Heart left ventricle (tissue), 16 donors: ENCODE measurements at regions of chr7 and their contacts with region 1.

Region 1: GRCh38 chr7:102450242-102450641 is 14.4 kb downstream of the ALKBH4 start:
- DNase-seq: no peak
- ATAC-seq: no peak
- H3K4me3 ChIP-seq: no peak overlapping the region
- H3K27ac ChIP-seq: no peak overlapping the region
- H3K4me1 ChIP-seq: peaks cover 0 to 11% (median 0%) of the 10 kb centered on the region in 12 donors
- H3K27me3 ChIP-seq: no peaks in the 10 kb centered on the region
- CTCF ChIP-seq: peak in 1 of 12 donors; percentile 19
- POLR2A ChIP-seq: no peak

Region 2: DNA sequence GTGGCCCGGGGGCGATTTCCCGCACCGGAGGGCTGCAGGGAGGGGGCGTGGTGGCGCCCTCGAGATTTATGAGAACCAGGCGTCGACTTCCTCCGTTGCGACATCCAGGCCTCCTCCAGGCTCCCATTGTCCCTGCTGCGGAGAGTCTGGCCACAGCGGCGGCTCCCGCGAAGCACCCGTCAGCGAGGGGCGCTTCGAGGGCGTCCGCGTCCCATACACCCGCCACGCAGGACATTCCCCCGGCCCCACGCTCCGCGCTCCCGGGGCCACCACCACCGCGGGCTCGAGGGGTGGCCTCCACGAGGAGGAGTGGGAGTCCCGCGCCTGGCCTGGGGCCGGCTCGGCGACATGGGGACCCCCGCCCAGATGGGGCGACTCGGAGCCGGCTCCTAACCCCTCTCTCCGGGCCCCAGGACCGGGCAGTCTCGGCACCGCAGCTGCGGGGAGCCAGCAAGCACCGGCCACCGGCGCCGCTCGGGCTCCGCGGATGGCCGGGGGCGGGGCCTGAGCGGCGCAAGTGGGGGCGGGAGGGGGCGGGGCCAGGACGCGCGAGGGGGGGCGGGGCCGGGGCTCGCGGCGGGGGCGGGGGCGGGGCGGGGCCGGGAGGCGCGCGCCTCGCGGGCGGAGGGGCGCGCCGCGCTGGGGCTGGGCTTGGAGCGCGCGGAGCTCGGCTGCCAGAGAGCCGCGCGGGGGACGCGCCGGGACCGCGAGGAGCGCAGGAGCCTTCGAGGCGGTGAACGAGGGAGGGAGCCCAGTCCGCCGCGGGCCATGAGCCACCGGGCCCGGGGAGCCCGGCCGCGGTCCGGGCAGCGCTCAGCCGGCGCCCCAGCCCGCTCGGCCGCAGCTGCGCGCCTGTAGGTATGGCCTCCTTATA is 163.8 kb before region 1 on chr7 and contains the start of gene SH2B2:
- intact Hi-C with region 1: no loop called
- DNase-seq: peak; percentile 67 to 85 (median 79)
- ATAC-seq: peak; percentile 39 to 76 (median 72)
- H3K4me3 ChIP-seq: peak within 1 kb of the TSS; percentile 67 to 95 (median 81)
- H3K27ac ChIP-seq: peak within 1 kb of the TSS; percentile 68 to 97 (median 90)
- H3K4me1 ChIP-seq: peaks cover 7 to 42% (median 24%) of the 10 kb centered on the region in 12 donors
- H3K27me3 ChIP-seq: no peaks in the 10 kb centered on the region
- CTCF ChIP-seq: peak in 2 of 12 donors; percentile 10 to 14
- POLR2A ChIP-seq: peak in 1 of 2 donors; percentile 72
- total RNA-seq, gene SH2B2: 1.00 to 5.7 (median 2.5) TPM

Region 3: DNA sequence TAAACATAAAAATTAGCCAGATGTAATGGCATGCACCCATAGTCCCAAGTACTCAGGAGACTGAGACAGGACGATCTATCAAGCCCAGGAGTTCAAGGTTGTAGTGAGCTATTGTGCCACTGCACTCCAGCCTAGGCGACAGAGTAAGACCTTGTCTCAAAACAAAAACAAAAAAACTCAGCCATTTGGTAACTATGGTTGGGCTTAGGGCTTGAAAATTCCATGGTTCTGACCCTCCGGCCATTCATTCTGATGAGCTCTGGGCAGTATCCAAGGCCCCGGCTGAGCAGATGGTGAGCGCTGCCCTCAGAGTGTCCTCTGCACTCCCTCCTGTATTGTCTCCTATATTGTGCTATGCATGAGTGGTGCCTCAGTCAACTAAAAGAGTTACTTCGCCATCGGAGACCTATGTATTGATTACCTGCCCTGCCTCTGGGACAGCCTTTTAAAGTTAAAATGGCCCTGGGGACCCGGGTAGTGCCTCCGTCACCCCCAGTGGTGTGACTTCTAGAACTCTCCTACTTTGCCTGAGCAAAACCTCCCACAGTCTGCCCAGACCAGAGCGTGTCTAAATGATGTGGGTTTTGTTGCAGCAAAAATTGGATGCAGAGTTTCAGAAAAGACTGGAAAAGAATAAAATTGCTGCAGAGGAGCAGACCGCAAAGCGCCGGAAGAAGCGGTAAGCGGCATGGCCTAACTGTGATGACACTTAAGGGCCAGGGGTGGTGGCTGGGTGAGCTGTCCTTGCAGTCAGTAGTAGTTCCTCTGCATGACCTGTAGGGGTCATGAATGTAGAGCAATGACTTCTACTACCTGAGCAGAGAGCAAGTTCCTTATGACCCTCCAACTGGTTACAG is 46.0 kb before region 1 on chr7:
- intact Hi-C with region 1: loop called in 1 of 10 experiments (anchors 10 kb)
- DNase-seq: no peak
- ATAC-seq: peak in 3 of 4 donors; percentile 84 to 90 (median 88)
- H3K4me3 ChIP-seq: no peak overlapping the region
- H3K27ac ChIP-seq: no peak overlapping the region
- H3K4me1 ChIP-seq: peaks cover 0 to 11% (median 0%) of the 10 kb centered on the region in 12 donors
- H3K27me3 ChIP-seq: no peaks in the 10 kb centered on the region
- CTCF ChIP-seq: peak; percentile 48 to 69 (median 58)
- POLR2A ChIP-seq: no peak